IMR-90 (cell line): ENCODE measurements at regions of chr6 and their contacts with region 1.

Region 1: GRCh38 chr6:43075670-43076463 is at the start of gene PTK7:
- DNase-seq: peak; percentile 54
- ATAC-seq: peak; percentile 77
- H3K4me3 ChIP-seq: peak within 1 kb of the TSS; percentile 76
- H3K27ac ChIP-seq: peak within 1 kb of the TSS; percentile 98
- H3K4me1 ChIP-seq: peaks cover 25% of the 10 kb centered on the region
- H3K27me3 ChIP-seq: no peaks in the 10 kb centered on the region
- CTCF ChIP-seq: no peak
- POLR2A ChIP-seq: no peak
- RAD21 ChIP-seq: no peak
- total RNA-seq, gene PTK7: 44.4 and 47.1 TPM in 2 replicates

Region 2: DNA sequence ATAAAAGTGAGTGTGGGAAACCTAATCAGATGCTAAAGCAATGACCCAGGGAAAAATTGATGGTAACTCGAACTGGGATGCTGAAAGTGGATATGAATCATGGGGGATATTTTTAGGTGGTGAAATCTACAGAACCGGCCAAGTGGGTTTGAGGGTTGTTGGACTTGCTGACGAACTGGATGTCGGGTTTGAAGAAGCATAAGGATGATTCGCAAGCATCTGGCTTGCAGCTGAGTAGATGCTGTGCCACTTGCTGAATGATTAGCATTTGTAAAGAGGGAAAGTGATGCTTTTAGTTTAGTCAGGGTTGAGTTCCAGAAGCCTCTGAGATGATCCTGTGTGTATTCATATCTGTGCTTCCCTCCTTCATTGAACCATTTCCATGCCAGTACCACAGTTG is 457.2 kb before region 1 on chr6:
- CTCF ChIA-PET with region 1: no interaction called
- POLR2A ChIA-PET with region 1: no interaction called
- dilution Hi-C with region 1: no loop called
- in situ Hi-C with region 1: no loop called
- intact Hi-C with region 1: no loop called
- DNase-seq: peak; percentile 83
- ATAC-seq: no peak
- H3K4me3 ChIP-seq: no peak overlapping the region
- H3K27ac ChIP-seq: no peak overlapping the region
- H3K4me1 ChIP-seq: no peaks in the 10 kb centered on the region
- H3K27me3 ChIP-seq: no peaks in the 10 kb centered on the region
- CTCF ChIP-seq: no peak
- POLR2A ChIP-seq: no peak
- RAD21 ChIP-seq: no peak

Region 3: DNA sequence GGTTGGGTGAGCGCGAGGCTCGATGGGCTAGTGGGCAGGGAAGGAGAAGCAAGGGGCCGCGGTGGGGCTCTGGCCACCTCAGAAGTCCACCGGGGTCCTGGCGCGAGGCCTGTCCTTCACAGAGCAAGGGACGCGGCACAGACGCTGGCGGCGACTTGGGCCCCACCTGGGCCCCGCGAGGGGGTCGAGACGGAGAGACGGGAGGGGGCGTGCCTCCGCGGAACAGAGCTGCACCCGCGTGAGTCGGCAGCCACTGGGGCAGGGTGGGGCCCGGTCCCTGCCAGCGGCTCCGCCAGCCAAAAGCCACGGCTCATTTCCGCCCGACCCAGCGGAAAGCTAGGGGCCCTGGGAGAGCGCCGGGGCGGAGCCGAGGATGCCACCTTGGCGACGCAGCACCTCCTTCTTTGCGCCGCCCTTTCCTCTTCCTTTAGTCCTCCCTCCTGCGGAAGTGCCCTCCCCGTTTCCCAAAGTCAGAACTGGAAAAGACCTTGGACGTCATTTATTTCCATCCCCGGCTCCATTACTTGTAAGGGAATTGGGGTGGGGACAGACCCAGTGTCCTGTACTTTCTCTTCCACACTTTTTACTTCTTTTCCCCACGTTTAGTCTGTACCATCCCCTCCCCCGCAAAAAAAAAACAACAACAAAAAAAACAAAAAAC is 22.2 kb before region 1 on chr6 and contains the start of gene CUL7:
- CTCF ChIA-PET with region 1: no interaction called
- POLR2A ChIA-PET with region 1: interaction called, 3 read pairs
- dilution Hi-C with region 1: no loop called
- in situ Hi-C with region 1: no loop called
- intact Hi-C with region 1: loop called (anchors 1 kb)
- DNase-seq: peak; percentile 93
- ATAC-seq: peak; percentile 95
- H3K4me3 ChIP-seq: peak within 1 kb of the TSS; percentile 68
- H3K27ac ChIP-seq: peak within 1 kb of the TSS; percentile 87
- H3K4me1 ChIP-seq: peaks cover 20% of the 10 kb centered on the region
- H3K27me3 ChIP-seq: no peaks in the 10 kb centered on the region
- CTCF ChIP-seq: 0 out of 2 replicates have a peak, but pooled peaks have one; percentile 5
- POLR2A ChIP-seq: peak; percentile 90
- RAD21 ChIP-seq: peak; percentile 4; the same call in 1 of the 2 replicates
- total RNA-seq, gene CUL7: 33.3 and 39.3 TPM in 2 replicates

Region 4: DNA sequence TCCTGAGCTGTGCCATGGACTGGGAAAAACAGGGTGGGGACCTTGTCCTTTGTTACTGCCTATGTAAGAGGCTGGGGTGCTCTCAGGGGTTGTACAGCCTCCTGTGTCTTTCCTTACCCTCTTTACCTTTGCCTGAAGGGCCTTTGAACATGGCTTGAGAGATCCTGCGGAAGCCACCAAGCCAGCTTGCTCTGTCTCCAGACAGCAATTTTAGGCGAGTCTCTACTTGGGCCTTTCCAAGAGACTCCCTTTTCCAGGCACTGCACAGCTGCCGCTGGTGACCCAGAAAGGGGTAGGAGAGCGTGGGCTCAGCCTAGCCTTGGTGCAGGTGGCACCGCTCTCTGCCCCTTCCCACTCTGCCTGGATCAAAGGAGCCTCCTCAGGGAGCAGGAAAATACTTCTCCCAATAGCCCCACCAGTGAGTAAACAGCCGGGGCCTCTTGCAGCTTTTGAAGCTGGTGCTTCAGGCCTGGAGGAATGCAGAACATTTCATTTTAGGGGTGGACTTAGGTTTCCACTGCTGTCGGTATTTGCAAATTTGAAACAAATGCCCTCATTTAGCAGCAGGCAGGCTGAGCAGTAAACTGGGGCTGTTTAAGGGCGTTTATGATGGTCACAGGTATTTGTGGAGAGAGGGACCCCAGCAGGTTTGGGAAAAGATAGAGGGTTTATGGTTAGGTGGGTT is 14.1 kb after region 1 on chr6:
- CTCF ChIA-PET with region 1: no interaction called
- POLR2A ChIA-PET with region 1: no interaction called
- dilution Hi-C with region 1: no loop called
- in situ Hi-C with region 1: no loop called
- intact Hi-C with region 1: loop called (anchors 2 kb)
- DNase-seq: peak; percentile 43
- ATAC-seq: peak; percentile 84
- H3K4me3 ChIP-seq: no peak overlapping the region
- H3K27ac ChIP-seq: peak overlapping the region; percentile 65
- H3K4me1 ChIP-seq: peaks cover 32% of the 10 kb centered on the region
- H3K27me3 ChIP-seq: no peaks in the 10 kb centered on the region
- CTCF ChIP-seq: no peak
- POLR2A ChIP-seq: no peak
- RAD21 ChIP-seq: no peak

Region 5: DNA sequence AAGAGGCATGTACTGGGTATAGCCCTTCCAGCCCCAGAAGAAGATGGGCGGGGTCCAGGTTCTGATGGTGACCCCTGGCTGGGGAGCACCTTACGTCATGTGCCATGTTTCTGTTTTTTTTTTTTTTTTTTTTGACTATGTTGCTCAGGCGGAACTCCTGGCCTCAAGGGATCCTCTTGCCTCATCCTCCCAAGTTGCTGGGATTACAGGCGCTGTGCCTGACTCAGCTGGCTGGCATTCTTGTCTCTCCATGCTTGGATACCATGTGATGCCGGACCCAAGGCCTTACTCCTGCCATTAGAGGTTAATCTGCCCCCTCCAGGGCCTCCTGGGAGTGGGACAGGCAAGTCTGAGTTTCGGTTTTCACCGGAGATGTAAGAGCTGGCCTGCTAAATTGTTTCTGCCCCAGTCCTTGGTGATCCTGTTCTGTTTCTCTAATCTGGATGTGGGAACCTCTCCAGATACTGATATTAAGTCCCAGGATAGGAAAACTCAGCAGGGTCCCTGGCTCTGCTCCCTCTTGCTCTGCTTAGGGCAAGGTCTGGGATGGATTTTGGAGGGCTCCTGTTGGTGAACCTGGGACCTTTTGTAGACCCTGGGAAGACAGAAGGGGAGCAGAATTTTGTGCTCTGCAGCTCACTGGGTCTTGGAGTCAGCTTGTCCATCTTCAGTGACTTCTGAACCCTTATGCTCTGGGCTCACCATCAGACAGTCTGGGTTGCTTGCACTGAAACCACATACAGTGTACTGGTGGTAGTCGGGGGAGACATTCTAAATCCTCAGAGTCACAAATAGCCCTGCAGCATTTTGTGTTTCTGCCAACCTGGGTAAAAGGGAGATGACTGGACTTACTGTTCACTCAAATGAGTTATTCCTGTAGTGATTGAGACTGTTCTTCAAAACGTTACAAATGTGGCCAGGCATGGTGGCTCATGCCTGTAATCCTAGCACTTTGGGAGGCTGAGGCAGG is 45.4 kb after region 1 on chr6:
- CTCF ChIA-PET with region 1: interaction called, 3 read pairs
- POLR2A ChIA-PET with region 1: no interaction called
- dilution Hi-C with region 1: no loop called
- in situ Hi-C with region 1: loop called (anchors 5 kb)
- intact Hi-C with region 1: loop called (anchors 2 kb)
- DNase-seq: peak; percentile 98
- ATAC-seq: peak; percentile 77
- H3K4me3 ChIP-seq: no peak overlapping the region; the same call in 1 of the 2 replicates
- H3K27ac ChIP-seq: peak overlapping the region; percentile 86
- H3K4me1 ChIP-seq: peaks cover 64% of the 10 kb centered on the region
- H3K27me3 ChIP-seq: no peaks in the 10 kb centered on the region
- CTCF ChIP-seq: peak; percentile 29
- POLR2A ChIP-seq: no peak
- RAD21 ChIP-seq: 0 out of 2 replicates have a peak, but pooled peaks have one; percentile 14

Region 6: GRCh38 chr6:43143235-43144124 is 67.6 kb after region 1 on chr6:
- CTCF ChIA-PET with region 1: interaction called, 7 read pairs
- POLR2A ChIA-PET with region 1: interaction called, 3 read pairs
- dilution Hi-C with region 1: no loop called
- in situ Hi-C with region 1: no loop called
- intact Hi-C with region 1: loop called (anchors 1 kb)
- DNase-seq: peak; percentile 91
- ATAC-seq: peak; percentile 99
- H3K4me3 ChIP-seq: no peak overlapping the region
- H3K27ac ChIP-seq: peak overlapping the region; percentile 28
- H3K4me1 ChIP-seq: peaks cover 10% of the 10 kb centered on the region
- H3K27me3 ChIP-seq: no peaks in the 10 kb centered on the region
- CTCF ChIP-seq: peak; percentile 99
- POLR2A ChIP-seq: peak; percentile 40; the same call in 1 of the 2 replicates
- RAD21 ChIP-seq: peak; percentile 100